Activated CD4-positive, alpha-beta memory T cell treated with anti-CD3 and anti-CD28 coated beads, Interleukin-2, amount 10 ng/mL, durations not matched to agents 7 days and 5 days (primary cell): ENCODE measurements at regions of chr12 and their contacts with region 1.

Region 1: DNA sequence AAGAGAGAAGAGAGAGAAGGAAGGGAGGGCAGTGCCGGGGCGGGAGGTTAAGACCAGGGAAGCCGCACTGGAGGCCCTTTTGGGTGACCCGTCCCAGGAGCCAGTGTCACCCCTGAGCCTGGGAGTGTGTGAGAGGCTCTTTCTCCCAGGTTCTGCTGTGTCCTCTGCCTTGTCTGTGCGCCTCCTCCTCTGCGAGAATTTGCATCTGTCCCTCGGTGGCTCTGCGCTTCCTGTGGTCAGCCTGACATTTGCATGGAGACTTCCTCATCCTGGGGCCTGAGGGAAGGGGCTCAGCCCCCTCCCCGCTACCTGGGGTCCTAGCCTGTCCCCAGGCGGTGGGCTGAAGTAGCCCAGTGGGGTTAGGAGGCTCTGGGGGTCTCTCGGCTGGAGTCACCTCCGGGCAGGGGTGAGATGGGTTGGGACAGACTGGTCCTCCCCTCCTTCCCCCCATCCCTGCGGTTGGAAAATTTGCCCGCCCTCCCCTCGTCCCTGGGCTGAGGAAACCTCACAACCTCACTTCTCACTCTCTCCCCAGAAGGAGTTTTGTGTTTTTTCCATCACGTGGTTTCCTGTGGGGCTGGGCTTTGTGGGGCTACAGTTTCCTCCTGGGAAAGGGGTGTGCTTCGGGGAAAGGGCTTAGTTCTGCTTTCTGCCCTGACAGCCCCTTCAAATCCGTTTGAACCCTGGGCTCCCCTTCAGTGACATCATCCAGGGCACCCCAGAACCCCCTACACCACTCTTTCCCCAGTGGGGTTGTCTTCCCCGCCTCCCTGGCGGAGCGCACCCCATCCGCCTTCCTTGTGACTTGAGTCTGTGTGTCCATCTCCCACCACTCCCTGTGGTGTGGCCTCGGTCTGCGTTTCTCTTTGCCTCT is 2.5 kb downstream of the PTPN6 start:
- DNase-seq: peak; percentile 84
- H3K4me3 Mint-ChIP-seq: peak overlapping the region; percentile 94
- H3K27ac Mint-ChIP-seq: peak overlapping the region; percentile 99
- H3K4me1 Mint-ChIP-seq: peaks cover 81% of the 10 kb centered on the region
- H3K27me3 Mint-ChIP-seq: no peaks in the 10 kb centered on the region

Region 2: DNA sequence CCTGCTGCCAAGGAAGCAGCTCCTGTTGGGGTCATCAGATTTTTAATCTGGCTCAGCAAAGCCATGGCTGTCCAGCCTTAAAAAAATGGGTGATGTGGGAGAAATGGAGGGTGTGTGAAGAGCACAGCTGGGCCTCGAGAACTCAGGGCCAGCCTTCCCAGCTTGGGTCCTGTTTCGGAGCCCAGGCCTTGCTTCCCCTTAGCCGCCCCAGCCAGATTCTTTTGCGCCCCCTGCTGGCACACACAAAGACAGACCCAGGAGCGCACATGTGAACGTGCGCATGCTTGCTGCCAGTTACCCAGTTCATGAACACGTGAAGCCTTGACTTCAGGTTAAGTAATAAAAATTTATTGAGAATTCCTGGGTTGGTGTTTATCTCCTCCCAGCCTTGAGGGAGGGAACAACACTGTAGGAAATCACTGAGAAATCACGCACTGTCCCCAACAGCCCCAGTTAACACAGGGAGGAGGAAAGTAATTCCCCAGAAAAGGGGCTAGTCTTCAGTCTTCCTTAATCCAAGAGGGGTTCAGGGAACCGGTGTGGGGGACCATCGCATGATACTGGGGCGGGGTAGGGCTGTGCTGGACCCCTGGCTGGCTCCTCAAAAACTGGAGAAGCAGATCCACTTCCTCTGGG is 11.5 kb after region 1 on chr12:
- CTCF ChIA-PET with region 1: interaction called, 465 read pairs
- POLR2A ChIA-PET with region 1: interaction called, 1,188 read pairs
- DNase-seq: peak; percentile 89
- H3K4me3 Mint-ChIP-seq: no peak overlapping the region
- H3K27ac Mint-ChIP-seq: peak overlapping the region; percentile 83
- H3K4me1 Mint-ChIP-seq: peaks cover 79% of the 10 kb centered on the region
- H3K27me3 Mint-ChIP-seq: no peaks in the 10 kb centered on the region

Region 3: GRCh38 chr12:6987948-6988553 is 34.4 kb after region 1 on chr12:
- CTCF ChIA-PET with region 1: no interaction called
- POLR2A ChIA-PET with region 1: no interaction called
- DNase-seq: no peak
- H3K4me3 Mint-ChIP-seq: no peak overlapping the region
- H3K27ac Mint-ChIP-seq: no peak overlapping the region
- H3K4me1 Mint-ChIP-seq: no peaks in the 10 kb centered on the region
- H3K27me3 Mint-ChIP-seq: no peaks in the 10 kb centered on the region